ENCODE measurements at regions of chr7 and their contacts with region 1.

Region 1: DNA sequence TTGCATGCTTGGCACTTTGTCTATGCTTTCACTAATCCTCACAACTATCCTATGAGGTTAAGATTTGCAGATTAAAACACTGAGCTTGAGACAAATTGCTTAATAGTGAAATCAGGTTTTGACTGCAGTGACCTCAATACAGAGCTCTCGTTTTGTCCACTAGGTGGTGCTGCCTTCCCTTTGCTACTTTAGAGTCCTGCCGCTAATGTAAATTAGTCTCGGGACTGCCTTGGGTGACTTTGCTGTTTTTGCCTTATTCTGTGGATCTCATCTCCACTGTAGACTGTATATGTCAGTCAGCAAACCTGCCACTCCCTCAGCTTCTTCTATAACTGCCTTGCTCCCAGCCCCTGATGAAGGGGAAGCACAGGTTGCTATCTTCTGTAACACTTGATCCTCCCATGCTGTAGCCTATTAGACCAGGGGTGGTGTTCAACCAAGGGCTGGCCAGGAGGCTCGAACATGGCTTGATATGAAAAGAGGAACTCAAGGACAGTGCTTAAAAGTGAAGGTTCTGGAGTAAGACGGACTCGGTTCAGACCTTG is 26.0 kb downstream of the ASB4 start:
- DNase-seq: peak; percentile 76
- ATAC-seq: peak; percentile 92
- H3K4me3 Mint-ChIP-seq: no peak overlapping the region
- H3K27ac Mint-ChIP-seq: no peak overlapping the region
- H3K4me1 Mint-ChIP-seq: no peaks in the 10 kb centered on the region
- H3K27me3 Mint-ChIP-seq: peaks cover 7% of the 10 kb centered on the region

Region 2: GRCh38 chr7:95501261-95501832 is 10.4 kb before region 1 on chr7:
- CTCF ChIA-PET with region 1: interaction called, 13 read pairs
- POLR2A ChIA-PET with region 1: no interaction called
- intact Hi-C with region 1: no loop called
- DNase-seq: peak; percentile 46
- ATAC-seq: peak; percentile 92
- H3K4me3 Mint-ChIP-seq: no peak overlapping the region
- H3K27ac Mint-ChIP-seq: peak overlapping the region; percentile 66
- H3K4me1 Mint-ChIP-seq: peaks cover 24% of the 10 kb centered on the region
- H3K27me3 Mint-ChIP-seq: peaks cover 15% of the 10 kb centered on the region

Region 3: GRCh38 chr7:95690367-95690947 is 178.7 kb after region 1 on chr7:
- CTCF ChIA-PET with region 1: interaction called, 42 read pairs
- POLR2A ChIA-PET with region 1: no interaction called
- intact Hi-C with region 1: loop called (anchors 1 kb)
- DNase-seq: peak; percentile 6
- ATAC-seq: peak; percentile 63
- H3K4me3 Mint-ChIP-seq: no peak overlapping the region
- H3K27ac Mint-ChIP-seq: no peak overlapping the region
- H3K4me1 Mint-ChIP-seq: peaks cover 3% of the 10 kb centered on the region
- H3K27me3 Mint-ChIP-seq: peaks cover 6% of the 10 kb centered on the region

Region 4: GRCh38 chr7:95871078-95871782 is 359.4 kb after region 1 on chr7:
- CTCF ChIA-PET with region 1: interaction called, 7 read pairs
- POLR2A ChIA-PET with region 1: no interaction called
- intact Hi-C with region 1: loop called (anchors 1 to 5 kb)
- DNase-seq: peak; percentile 29
- ATAC-seq: no peak
- H3K4me3 Mint-ChIP-seq: no peak overlapping the region
- H3K27ac Mint-ChIP-seq: no peak overlapping the region
- H3K4me1 Mint-ChIP-seq: no peaks in the 10 kb centered on the region
- H3K27me3 Mint-ChIP-seq: peaks cover 10% of the 10 kb centered on the region

Measured in activated CD4-positive, alpha-beta T cell treated with anti-CD3 and anti-CD28 coated beads for 36 hours (primary cell).